ENCODE measurements at regions of chr1 and their contacts with region 1.

Region 1: DNA sequence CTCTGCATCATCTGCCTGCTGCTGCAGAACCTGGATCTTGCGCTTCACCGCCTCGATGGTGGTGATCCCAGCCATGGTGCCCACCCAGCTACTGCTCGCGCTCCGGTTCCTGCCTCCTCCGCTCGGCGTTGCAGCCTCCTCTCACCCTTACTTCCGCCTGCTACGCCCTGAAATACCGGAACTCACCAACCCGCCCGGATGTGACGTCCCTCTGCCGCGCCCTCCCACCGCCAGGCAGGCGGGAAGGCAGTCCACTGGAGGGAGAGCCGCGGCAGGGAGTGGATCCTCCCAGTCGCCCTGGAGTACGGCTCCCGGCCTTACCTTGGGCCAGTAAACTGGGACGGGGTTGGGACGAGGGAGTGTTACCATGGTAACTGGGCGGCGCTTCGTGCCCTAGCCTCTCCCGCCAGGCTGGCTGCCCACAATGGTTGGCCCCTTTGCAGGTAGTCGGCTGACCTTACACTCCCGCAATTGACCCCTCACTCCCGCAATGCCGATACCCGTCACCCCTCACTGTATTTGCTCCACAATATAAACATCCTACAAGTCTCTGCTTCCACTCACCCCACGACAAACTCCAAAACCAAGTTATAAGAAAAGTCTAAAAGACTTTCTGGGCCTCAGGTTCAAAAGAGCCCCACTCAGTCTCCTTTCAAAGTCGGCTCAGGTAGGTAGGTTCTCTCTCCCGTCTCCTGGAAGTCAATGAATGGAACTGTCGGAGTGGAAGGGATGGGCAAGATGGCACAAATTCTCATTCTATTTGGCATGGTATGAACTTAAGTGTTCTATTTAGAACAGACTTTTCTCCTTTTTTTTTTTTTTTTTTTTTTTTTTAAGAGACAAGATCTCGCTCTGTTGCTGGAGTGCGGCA is 8.6 kb downstream of the TPM3 start:
- DNase-seq: peak; percentile 98
- ATAC-seq: peak; percentile 72
- H3K4me3 Mint-ChIP-seq: peak overlapping the region; percentile 99
- H3K27ac Mint-ChIP-seq: peak overlapping the region; percentile 100
- H3K4me1 Mint-ChIP-seq: peaks cover 39% of the 10 kb centered on the region
- H3K27me3 Mint-ChIP-seq: no peaks in the 10 kb centered on the region

Region 2: GRCh38 chr1:153727463-153728304 is 455.6 kb before region 1 on chr1 and contains the start of gene INTS3:
- CTCF ChIA-PET with region 1: no interaction called
- POLR2A ChIA-PET with region 1: no interaction called
- intact Hi-C with region 1: loop called in 1 of 2 experiments (anchors 1 kb)
- DNase-seq: peak; percentile 99
- ATAC-seq: peak; percentile 99
- H3K4me3 Mint-ChIP-seq: peak within 1 kb of the TSS; percentile 93
- H3K27ac Mint-ChIP-seq: peak within 1 kb of the TSS; percentile 95
- H3K4me1 Mint-ChIP-seq: peaks cover 44% of the 10 kb centered on the region
- H3K27me3 Mint-ChIP-seq: no peaks in the 10 kb centered on the region
- total RNA-seq, gene INTS3: 52.0 to 58.0 TPM

Region 3: GRCh38 chr1:153908071-153908470 is 275.2 kb before region 1 on chr1:
- CTCF ChIA-PET with region 1: no interaction called
- POLR2A ChIA-PET with region 1: no interaction called
- intact Hi-C with region 1: no loop called
- DNase-seq: no peak
- ATAC-seq: no peak
- H3K4me3 Mint-ChIP-seq: no peak overlapping the region
- H3K27ac Mint-ChIP-seq: no peak overlapping the region
- H3K4me1 Mint-ChIP-seq: peaks cover 47% of the 10 kb centered on the region
- H3K27me3 Mint-ChIP-seq: no peaks in the 10 kb centered on the region

Region 4: GRCh38 chr1:154093699-154094098 is 89.6 kb before region 1 on chr1:
- CTCF ChIA-PET with region 1: no interaction called
- POLR2A ChIA-PET with region 1: no interaction called
- intact Hi-C with region 1: no loop called
- DNase-seq: no peak
- ATAC-seq: no peak
- H3K4me3 Mint-ChIP-seq: no peak overlapping the region
- H3K27ac Mint-ChIP-seq: no peak overlapping the region
- H3K4me1 Mint-ChIP-seq: no peaks in the 10 kb centered on the region
- H3K27me3 Mint-ChIP-seq: no peaks in the 10 kb centered on the region

Region 5: DNA sequence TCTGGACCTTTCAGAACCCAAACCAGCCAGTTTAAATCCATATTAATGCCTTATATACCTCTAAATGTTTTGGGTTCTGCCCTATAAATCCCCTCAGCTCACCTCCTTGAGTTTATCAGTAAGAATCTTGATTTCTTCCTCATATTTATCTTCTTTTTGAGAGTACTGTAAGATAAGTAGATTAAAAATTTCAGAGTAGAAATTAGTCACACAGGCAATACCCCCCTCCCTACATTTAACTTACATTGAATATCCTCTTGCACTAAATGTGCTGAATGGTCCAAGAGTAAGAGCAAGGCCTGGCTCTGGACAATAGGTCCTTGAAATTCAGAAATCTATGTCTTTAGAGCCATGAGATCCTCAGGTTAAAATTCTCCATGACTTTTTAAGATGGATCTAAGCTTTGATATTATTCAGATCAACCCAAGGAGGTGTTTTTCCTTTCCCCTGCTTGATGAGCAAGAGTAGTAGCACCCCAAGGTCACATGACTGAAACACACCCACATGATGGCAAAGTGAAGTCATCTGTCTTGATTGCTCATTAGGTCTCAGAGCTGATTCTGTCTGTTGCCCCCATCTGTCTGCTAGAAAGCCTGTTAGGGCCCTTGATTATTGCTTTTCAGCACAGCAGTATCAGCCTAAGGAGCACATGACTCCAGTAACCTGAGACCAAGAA is 12.6 kb before region 1 on chr1:
- CTCF ChIA-PET with region 1: interaction called, 4 read pairs
- POLR2A ChIA-PET with region 1: interaction called, 4 read pairs
- intact Hi-C with region 1: loop called in 1 of 2 experiments (anchors 1 kb)
- DNase-seq: peak; percentile 83
- ATAC-seq: peak; percentile 97
- H3K4me3 Mint-ChIP-seq: peak overlapping the region; percentile 27
- H3K27ac Mint-ChIP-seq: peak overlapping the region; percentile 86
- H3K4me1 Mint-ChIP-seq: peaks cover 53% of the 10 kb centered on the region
- H3K27me3 Mint-ChIP-seq: no peaks in the 10 kb centered on the region

Region 6: GRCh38 chr1:154324669-154325582 is 141.6 kb after region 1 on chr1 and contains the start of gene ATP8B2:
- CTCF ChIA-PET with region 1: no interaction called
- POLR2A ChIA-PET with region 1: no interaction called
- intact Hi-C with region 1: loop called (anchors 1 to 5 kb)
- DNase-seq: peak; percentile 92
- ATAC-seq: peak; percentile 70
- H3K4me3 Mint-ChIP-seq: peak within 1 kb of the TSS; percentile 99
- H3K27ac Mint-ChIP-seq: peak within 1 kb of the TSS; percentile 94
- H3K4me1 Mint-ChIP-seq: peaks cover 39% of the 10 kb centered on the region
- H3K27me3 Mint-ChIP-seq: no peaks in the 10 kb centered on the region
- total RNA-seq, gene ATP8B2: 48.2 TPM

Region 7: DNA sequence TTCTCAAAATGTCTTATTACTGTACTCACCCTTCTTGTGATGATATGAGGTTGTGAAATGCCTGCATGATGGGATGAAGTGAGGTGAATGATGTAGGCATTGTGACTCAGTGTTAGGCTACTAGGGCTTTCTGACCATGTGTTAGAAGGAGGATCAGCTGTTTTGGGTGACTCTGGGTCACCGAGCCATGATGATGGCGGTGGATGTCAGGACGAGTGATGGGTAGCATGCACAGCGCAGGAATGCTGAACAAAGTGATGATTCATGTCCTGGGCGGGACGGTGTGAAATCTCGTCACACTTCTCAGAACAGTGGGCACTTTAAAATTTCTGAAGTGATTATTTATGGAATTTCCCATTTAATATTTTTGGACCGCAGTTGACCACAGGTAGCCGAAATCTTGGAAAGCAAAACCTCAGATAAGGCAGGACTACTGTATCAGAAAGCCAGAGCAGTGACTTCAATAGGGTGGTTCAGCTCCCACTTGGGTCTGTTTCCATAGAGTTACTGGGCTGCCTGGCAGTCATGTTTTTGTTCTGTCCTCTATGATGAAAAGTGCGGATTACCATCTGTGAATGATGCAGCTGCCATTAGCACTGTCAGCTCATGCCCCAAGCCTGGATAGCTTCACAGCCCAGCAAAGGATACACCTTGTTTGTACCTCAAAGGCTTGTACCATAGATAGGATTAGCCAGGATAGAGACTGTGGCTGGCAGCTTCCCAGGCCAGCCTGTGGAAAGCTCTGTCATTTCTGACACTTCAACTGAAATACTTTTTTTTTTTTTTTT is 248.5 kb after region 1 on chr1:
- CTCF ChIA-PET with region 1: no interaction called
- POLR2A ChIA-PET with region 1: no interaction called
- intact Hi-C with region 1: loop called in 1 of 2 experiments (anchors 10 kb)
- DNase-seq: peak; percentile 76
- ATAC-seq: peak; percentile 83
- H3K4me3 Mint-ChIP-seq: no peak overlapping the region
- H3K27ac Mint-ChIP-seq: peak overlapping the region; percentile 58
- H3K4me1 Mint-ChIP-seq: peaks cover 56% of the 10 kb centered on the region
- H3K27me3 Mint-ChIP-seq: no peaks in the 10 kb centered on the region

Measured in activated CD4-positive, alpha-beta T cell treated with anti-CD3 and anti-CD28 coated beads for 36 hours (primary cell).